ENCODE measurements at regions of chr20 and their contacts with region 1.

Region 1: DNA sequence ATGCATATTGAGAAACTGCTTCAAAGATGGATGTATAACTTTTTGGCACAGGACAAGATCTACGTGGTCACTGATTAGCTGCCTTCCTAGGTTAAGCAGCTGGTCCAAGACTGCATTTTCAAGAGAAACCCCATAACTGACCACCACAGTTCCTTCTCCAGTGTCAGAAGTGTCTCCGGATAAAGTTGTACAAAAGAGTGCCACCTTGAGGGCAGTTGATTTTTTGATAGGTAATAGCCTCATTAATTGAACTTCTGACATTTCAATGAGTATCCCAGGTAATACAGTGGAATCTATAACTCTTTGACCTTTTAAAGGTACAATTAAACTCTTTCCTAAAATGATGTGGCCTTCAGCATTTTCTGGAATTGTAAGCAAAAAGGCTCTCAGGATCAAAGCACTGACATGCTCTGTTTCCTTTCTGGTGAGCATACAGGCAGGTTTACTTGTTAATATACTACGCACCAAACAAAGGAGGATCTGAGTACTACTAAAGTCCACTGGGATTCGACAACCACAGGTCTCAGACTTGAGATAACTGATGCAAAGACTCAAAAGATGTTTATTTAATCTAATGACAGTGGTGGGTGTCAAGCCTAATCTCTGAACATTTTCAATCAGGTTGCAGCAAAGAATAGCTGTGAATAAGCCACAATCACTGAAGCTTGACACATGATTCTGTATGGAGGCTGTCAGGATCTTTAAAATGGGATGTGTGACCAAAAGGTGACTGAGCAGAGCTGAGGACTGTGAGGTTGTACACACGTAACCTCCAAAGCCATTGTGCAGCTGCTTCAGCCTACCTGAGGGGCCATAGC is 21.2 kb downstream of the MKKS start:
- DNase-seq: no peak
- H3K4me3 ChIP-seq: no peak overlapping the region
- H3K27ac ChIP-seq: no peak overlapping the region
- H3K4me1 ChIP-seq: peaks cover 9% of the 10 kb centered on the region
- H3K27me3 ChIP-seq: no peaks in the 10 kb centered on the region

Region 2: DNA sequence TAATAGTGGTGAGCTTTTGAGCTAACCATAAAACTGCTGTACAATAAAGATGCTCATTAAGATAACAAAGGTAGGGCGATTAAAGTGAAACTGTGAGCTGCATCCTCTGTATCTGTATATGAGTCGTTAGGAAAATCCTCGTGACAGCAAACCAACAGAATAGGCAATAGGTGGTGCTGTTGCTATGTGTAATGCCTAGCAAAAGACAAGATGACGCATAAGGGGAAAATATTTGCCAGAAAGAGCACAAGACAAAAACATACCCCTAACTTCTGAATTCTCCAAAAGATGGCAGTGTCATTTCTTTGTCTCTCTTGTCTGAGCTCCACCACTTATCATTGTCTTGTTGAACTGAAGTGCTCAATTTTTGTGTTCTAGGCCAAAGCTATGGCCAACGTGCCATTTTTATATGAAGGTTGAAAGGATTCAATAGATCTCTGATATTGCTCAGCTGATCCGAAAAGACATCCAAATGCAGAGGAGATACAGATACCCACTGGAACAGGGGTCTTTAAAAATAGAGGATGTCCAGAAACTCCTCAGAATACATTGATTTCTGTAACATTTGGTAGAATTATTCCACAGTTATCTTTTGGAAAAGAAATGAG is 434.3 kb before region 1 on chr20:
- in situ Hi-C with region 1: loop called (anchors 10 kb)
- DNase-seq: peak; percentile 89
- H3K4me3 ChIP-seq: peak overlapping the region; percentile 45; the same call in 1 of the 2 replicates
- H3K27ac ChIP-seq: no peak overlapping the region
- H3K4me1 ChIP-seq: no peaks in the 10 kb centered on the region
- H3K27me3 ChIP-seq: 0 out of 2 replicates have a peak, but pooled peaks cover 10% of the 10 kb centered on the region

Region 3: GRCh38 chr20:10157549-10157948 is 255.3 kb before region 1 on chr20:
- in situ Hi-C with region 1: no loop called
- DNase-seq: no peak
- H3K4me3 ChIP-seq: no peak overlapping the region
- H3K27ac ChIP-seq: no peak overlapping the region
- H3K4me1 ChIP-seq: no peaks in the 10 kb centered on the region
- H3K27me3 ChIP-seq: peaks cover 14% of the 10 kb centered on the region

Region 4: GRCh38 chr20:10647465-10647864 is 234.7 kb after region 1 on chr20:
- in situ Hi-C with region 1: no loop called
- DNase-seq: peak; percentile 23
- H3K4me3 ChIP-seq: no peak overlapping the region
- H3K27ac ChIP-seq: no peak overlapping the region
- H3K4me1 ChIP-seq: 0 out of 2 replicates have a peak, but pooled peaks cover 5% of the 10 kb centered on the region
- H3K27me3 ChIP-seq: no peaks in the 10 kb centered on the region

Measured in GM23248 (cell line).